Activated CD4-positive, alpha-beta memory T cell treated with anti-CD3 and anti-CD28 coated beads for 36 hours (primary cell): ENCODE measurements at regions of chr7 and their contacts with region 1.

Region 1: DNA sequence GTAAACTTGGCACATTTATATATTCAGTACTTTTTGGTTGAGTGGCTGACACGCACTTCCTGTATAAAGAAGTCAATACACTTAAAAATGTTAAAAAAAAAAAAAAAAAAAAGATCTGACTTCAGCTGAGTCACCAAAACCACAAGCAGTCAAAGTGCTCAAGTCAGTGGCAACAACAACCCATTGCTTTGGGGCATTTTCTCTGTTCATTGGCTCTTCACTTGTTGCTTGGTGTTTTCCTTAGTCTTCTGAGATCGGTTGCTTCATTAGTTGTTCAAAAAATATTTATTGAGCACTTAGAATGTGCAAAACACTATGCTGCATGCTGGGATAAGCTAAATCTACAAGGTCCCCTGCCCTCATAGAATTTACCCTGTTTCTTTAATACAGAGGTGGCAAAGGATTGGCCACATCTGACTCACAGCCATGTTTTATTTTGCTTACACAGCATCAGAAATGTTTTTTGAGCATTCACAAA is 63.7 kb downstream of the ZNRF2 start:
- DNase-seq: peak; percentile 56
- H3K4me3 Mint-ChIP-seq: peak overlapping the region; percentile 75
- H3K27ac Mint-ChIP-seq: peak overlapping the region; percentile 90
- H3K4me1 Mint-ChIP-seq: peaks cover 67% of the 10 kb centered on the region
- H3K27me3 Mint-ChIP-seq: no peaks in the 10 kb centered on the region

Region 2: GRCh38 chr7:30164567-30164966 is 183.6 kb before region 1 on chr7:
- CTCF ChIA-PET with region 1: interaction called, 3 read pairs
- POLR2A ChIA-PET with region 1: no interaction called
- intact Hi-C with region 1: loop called (anchors 2 kb)
- DNase-seq: no peak
- H3K4me3 Mint-ChIP-seq: no peak overlapping the region
- H3K27ac Mint-ChIP-seq: no peak overlapping the region
- H3K4me1 Mint-ChIP-seq: peaks cover 24% of the 10 kb centered on the region
- H3K27me3 Mint-ChIP-seq: no peaks in the 10 kb centered on the region

Region 3: GRCh38 chr7:30284298-30285066 is 63.6 kb before region 1 on chr7 and contains the start of gene ZNRF2:
- CTCF ChIA-PET with region 1: interaction called, 21 read pairs
- POLR2A ChIA-PET with region 1: interaction called, 5 read pairs
- intact Hi-C with region 1: loop called (anchors 1 kb)
- DNase-seq: peak; percentile 100
- H3K4me3 Mint-ChIP-seq: peak within 1 kb of the TSS; percentile 78
- H3K27ac Mint-ChIP-seq: peak within 1 kb of the TSS; percentile 90
- H3K4me1 Mint-ChIP-seq: peaks cover 47% of the 10 kb centered on the region
- H3K27me3 Mint-ChIP-seq: no peaks in the 10 kb centered on the region
- total RNA-seq, gene ZNRF2: 9.6 to 10.5 TPM

Region 4: GRCh38 chr7:30322271-30323005 is 25.7 kb before region 1 on chr7:
- CTCF ChIA-PET with region 1: interaction called, 9 read pairs
- POLR2A ChIA-PET with region 1: interaction called, 17 read pairs
- intact Hi-C with region 1: loop called (anchors 1 kb)
- DNase-seq: no peak
- H3K4me3 Mint-ChIP-seq: peak overlapping the region; percentile 73
- H3K27ac Mint-ChIP-seq: peak overlapping the region; percentile 86
- H3K4me1 Mint-ChIP-seq: peaks cover 72% of the 10 kb centered on the region
- H3K27me3 Mint-ChIP-seq: no peaks in the 10 kb centered on the region

Region 5: DNA sequence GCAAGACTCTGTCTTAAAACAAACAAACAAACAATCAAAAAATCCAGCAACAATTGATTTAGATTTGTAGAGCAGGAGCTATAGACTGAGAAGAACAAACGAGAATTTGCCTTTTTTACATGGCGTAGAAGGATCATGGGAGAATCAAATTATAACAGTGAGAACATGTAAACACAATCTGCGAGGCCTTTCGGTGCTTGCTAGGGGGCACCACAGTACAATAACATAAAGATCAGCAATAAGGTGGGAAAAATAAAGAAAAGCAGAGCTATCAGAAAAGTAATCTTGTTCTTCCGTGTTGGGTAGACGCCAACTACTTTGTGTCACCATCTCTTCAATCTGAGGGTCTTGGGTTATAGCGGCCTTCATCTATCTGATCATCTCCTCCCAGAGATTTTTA is 48.3 kb after region 1 on chr7:
- CTCF ChIA-PET with region 1: no interaction called
- POLR2A ChIA-PET with region 1: no interaction called
- intact Hi-C with region 1: no loop called
- DNase-seq: no peak
- H3K4me3 Mint-ChIP-seq: no peak overlapping the region
- H3K27ac Mint-ChIP-seq: no peak overlapping the region
- H3K4me1 Mint-ChIP-seq: no peaks in the 10 kb centered on the region
- H3K27me3 Mint-ChIP-seq: no peaks in the 10 kb centered on the region

Region 6: GRCh38 chr7:30412810-30413504 is 64.8 kb after region 1 on chr7:
- CTCF ChIA-PET with region 1: no interaction called
- POLR2A ChIA-PET with region 1: no interaction called
- intact Hi-C with region 1: loop called (anchors 10 kb)
- DNase-seq: no peak
- H3K4me3 Mint-ChIP-seq: no peak overlapping the region
- H3K27ac Mint-ChIP-seq: no peak overlapping the region
- H3K4me1 Mint-ChIP-seq: no peaks in the 10 kb centered on the region
- H3K27me3 Mint-ChIP-seq: no peaks in the 10 kb centered on the region

Region 7: DNA sequence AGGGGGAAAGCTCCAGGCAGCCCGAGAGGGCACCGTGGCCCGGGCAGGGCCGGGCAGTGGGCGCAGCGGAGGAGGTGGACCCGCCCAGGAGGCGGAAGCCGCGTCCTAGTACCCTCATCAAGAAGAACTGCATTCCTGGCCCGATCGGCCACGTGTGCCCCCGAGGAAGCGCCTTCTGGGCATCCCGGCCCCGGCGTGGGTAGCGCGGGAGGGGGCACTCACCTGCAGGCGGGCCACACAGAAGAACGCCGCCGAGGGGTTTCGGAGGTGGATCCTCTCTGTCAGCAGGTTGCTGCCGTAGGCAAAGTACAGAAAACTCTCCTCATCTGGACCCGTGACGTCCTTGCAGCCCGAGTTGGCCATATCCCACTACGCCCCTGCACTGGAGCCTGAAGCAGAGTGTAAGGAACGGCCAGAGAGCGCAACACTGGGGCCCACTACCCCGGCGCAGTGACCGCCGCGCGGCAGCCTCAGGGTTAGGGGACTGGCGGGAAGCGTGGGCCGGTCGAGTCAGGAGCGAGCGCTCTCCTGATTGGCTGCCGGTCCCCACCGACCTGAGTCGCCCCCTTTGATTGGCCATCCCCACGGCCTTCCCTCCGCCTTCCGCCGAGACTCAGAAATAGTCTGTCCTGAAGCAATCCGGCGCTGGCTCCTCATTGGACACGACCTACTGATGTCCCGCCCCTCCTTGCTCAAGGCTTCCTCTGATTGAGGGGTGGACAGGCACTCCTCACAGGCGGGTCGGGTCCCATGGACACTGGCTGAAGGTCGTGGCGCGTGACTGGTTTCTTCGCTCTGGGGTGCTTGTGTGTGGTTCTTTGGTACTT is 156.4 kb after region 1 on chr7 and contains the start of gene GGCT:
- CTCF ChIA-PET with region 1: no interaction called
- POLR2A ChIA-PET with region 1: no interaction called
- intact Hi-C with region 1: loop called (anchors 10 kb)
- DNase-seq: peak; percentile 99
- H3K4me3 Mint-ChIP-seq: peak within 1 kb of the TSS; percentile 77
- H3K27ac Mint-ChIP-seq: peak within 1 kb of the TSS; percentile 79
- H3K4me1 Mint-ChIP-seq: peaks cover 38% of the 10 kb centered on the region
- H3K27me3 Mint-ChIP-seq: no peaks in the 10 kb centered on the region
- total RNA-seq, gene GGCT: 60.5 to 68.0 TPM